Panc1 (cell line): ENCODE measurements at regions of chr4 and their contacts with region 1.

Region 1: DNA sequence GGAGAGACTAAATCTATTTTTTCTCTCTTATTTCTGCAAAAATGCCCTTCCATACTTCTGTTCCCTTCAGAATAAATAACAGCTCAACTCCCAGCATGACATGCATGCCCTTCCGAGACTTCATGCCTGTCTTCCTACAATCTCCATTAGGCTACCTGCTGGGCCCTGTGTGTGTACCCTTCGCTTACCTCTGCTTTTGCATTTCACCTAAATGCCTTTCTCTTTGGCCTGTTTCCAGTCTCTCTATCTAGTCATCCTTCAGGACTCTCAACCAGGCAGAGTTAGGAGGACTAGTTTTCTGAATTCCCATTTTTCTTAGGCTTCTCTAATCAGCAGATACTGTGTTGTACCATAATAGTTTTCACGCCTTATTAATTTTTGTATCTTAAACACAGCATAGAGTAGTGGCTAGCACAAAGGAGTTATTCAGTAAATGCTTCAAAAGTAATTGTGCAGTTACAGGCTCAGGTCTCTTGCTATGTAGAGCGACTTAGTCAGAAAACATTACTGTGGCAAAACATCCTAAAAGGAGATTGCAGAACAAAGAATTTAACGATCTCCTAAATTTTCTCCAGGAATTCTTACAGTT is 20.5 kb downstream of the SEPTIN11 start:
- DNase-seq: no peak
- ATAC-seq: no peak
- H3K4me3 ChIP-seq: no peak overlapping the region
- H3K27ac ChIP-seq: no peak overlapping the region
- H3K4me1 ChIP-seq: peaks cover 12% of the 10 kb centered on the region; the same call in 1 of the 2 replicates
- H3K27me3 ChIP-seq: no peaks in the 10 kb centered on the region
- CTCF ChIP-seq: no peak

Region 2: DNA sequence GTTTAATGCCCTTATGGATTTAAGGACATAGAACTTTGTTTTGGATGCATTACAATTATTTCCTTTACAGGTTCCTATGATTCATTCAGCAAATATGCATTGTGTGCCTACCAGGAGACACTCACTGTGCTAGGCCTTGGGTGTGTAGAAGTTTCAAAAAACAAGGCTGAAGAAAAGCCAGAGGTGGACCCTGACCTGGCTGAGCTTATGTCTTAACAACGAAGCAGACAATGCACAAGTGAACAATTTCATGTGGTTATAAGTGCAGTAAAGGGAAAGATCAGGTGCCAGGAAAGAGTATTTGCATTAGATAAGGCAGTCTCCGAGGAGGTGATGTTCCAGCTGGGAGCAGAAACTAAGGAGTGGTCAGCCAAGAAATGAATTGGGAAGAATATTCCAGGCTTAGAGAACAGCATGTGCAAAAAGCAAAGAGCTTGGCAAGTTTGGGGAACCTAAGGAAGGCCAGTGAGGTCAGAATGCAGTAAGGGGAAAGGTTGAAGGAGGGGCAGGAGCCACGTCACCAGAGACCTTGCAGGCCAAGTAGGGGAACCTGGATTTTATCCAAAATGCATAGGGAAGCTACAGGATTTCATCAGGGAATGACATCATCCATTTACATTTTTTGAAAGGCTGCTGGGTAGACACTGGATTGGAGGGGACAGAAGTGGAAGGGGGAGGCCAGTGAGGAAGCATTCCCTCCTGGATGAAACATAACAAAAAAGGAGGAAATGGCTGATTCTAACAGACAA is 265.7 kb before region 1 on chr4:
- CTCF ChIA-PET with region 1: no interaction called
- POLR2A ChIA-PET with region 1: no interaction called
- in situ Hi-C with region 1: no loop called
- intact Hi-C with region 1: no loop called
- DNase-seq: no peak
- ATAC-seq: peak; percentile 51; the same call in 1 of the 2 replicates
- H3K4me3 ChIP-seq: no peak overlapping the region
- H3K27ac ChIP-seq: no peak overlapping the region; the same call in 1 of the 2 replicates
- H3K4me1 ChIP-seq: peaks cover 10% of the 10 kb centered on the region
- H3K27me3 ChIP-seq: no peaks in the 10 kb centered on the region
- CTCF ChIP-seq: no peak

Region 3: DNA sequence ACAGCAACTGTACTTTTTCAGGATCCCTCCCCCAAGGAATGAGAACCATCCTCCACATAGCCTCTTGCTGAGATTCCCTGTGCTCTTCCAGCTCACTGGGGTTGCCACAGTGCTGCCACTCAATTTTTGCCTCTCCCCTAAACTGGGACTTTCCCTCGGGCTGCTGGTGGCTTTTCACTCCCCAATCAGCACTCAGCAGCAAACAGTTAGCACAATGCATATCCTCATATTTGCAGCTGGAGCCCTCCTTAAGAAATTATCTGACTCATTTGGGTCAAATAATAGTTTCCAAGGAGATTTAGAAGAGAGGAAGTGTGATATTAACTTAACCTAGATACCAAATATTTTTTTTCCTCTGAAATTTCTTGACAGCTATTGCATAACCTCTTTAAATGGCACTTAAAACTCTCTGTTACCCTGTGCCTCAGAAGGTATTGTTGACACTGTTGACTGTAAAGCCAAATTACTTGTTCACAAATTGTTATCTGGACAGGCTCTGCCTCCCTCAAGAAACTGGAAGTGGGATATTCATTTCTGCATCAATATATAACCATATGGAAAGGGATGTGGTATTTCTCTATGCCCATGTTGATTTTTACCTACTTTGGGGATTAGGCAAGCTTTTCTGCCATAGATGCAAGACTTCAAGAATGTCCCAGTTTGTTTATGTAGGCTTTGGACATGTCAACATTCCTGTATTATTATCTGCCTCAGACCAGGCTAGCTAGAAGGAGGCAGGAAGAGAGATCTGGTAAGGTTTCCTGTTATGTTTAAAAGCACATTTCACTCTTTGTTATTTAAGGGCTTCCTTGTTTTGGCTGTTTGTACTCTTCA is 37.5 kb after region 1 on chr4:
- CTCF ChIA-PET with region 1: no interaction called
- POLR2A ChIA-PET with region 1: interaction called, 13 read pairs
- in situ Hi-C with region 1: no loop called
- intact Hi-C with region 1: no loop called
- DNase-seq: no peak
- ATAC-seq: no peak
- H3K4me3 ChIP-seq: no peak overlapping the region
- H3K27ac ChIP-seq: no peak overlapping the region
- H3K4me1 ChIP-seq: no peaks in the 10 kb centered on the region
- H3K27me3 ChIP-seq: no peaks in the 10 kb centered on the region
- CTCF ChIP-seq: no peak

Region 4: GRCh38 chr4:77075869-77076799 is 106.1 kb after region 1 on chr4 and contains the start of gene CCNI:
- CTCF ChIA-PET with region 1: no interaction called
- POLR2A ChIA-PET with region 1: no interaction called
- in situ Hi-C with region 1: no loop called
- intact Hi-C with region 1: no loop called
- DNase-seq: peak; percentile 87
- ATAC-seq: peak; percentile 94
- H3K4me3 ChIP-seq: peak within 1 kb of the TSS; percentile 57 to 96
- H3K27ac ChIP-seq: peak within 1 kb of the TSS; percentile 97
- H3K4me1 ChIP-seq: peaks cover 15% of the 10 kb centered on the region
- H3K27me3 ChIP-seq: no peaks in the 10 kb centered on the region
- CTCF ChIP-seq: no peak
- total RNA-seq, gene CCNI: 125 TPM

Region 5: GRCh38 chr4:77220828-77221613 is 251.0 kb after region 1 on chr4:
- CTCF ChIA-PET with region 1: no interaction called
- POLR2A ChIA-PET with region 1: no interaction called
- in situ Hi-C with region 1: no loop called
- intact Hi-C with region 1: no loop called
- DNase-seq: no peak
- ATAC-seq: no peak
- H3K4me3 ChIP-seq: no peak overlapping the region
- H3K27ac ChIP-seq: no peak overlapping the region
- H3K4me1 ChIP-seq: no peaks in the 10 kb centered on the region
- H3K27me3 ChIP-seq: no peaks in the 10 kb centered on the region
- CTCF ChIP-seq: no peak